ENCODE measurements at regions of chr4 and their contacts with region 1.

Region 1: GRCh38 chr4:123127218-123127617 is 204.8 kb upstream of the NUDT6 start:
- DNase-seq: no peak
- H3K4me3 ChIP-seq: no peak overlapping the region
- H3K27me3 ChIP-seq: no peaks in the 10 kb centered on the region
- CTCF ChIP-seq: no peak; the same call in 1 of the 2 replicates

Region 2: DNA sequence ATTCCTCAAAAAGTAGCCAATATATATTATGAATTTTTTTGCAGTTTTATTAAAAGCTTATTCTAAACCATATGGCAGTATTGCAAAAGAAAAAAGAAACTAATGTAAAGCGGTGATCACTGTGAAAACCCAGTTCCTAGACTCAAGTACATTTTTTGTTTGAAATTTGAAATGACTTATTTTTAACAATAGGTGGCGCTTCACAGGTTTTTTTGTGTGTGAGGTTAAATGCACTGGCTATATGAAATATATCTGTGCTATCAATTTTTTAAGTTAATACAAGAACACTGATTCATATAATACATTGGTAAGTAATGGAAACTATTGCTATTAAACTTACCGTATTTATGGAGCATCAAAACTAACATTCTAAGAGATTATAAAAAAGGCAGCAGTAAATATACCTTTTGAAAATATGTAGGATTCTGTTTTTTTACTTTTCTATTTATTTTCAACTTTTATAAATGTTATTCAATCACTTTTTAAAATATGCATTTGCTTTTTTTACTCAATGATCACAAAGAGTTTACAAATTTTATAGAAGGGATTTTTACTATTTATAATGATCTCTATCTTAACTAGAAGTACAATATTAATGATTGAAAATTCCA is 263.7 kb after region 1 on chr4:
- CTCF ChIA-PET with region 1: interaction called, 10 read pairs
- POLR2A ChIA-PET with region 1: no interaction called
- DNase-seq: no peak
- H3K4me3 ChIP-seq: no peak overlapping the region
- H3K27me3 ChIP-seq: no peaks in the 10 kb centered on the region
- CTCF ChIP-seq: peak; percentile 44

Region 3: GRCh38 chr4:123443401-123444289 is 316.4 kb after region 1 on chr4:
- CTCF ChIA-PET with region 1: no interaction called
- POLR2A ChIA-PET with region 1: no interaction called
- DNase-seq: no peak
- H3K4me3 ChIP-seq: no peak overlapping the region
- H3K27me3 ChIP-seq: no peaks in the 10 kb centered on the region
- CTCF ChIP-seq: no peak

Region 4: DNA sequence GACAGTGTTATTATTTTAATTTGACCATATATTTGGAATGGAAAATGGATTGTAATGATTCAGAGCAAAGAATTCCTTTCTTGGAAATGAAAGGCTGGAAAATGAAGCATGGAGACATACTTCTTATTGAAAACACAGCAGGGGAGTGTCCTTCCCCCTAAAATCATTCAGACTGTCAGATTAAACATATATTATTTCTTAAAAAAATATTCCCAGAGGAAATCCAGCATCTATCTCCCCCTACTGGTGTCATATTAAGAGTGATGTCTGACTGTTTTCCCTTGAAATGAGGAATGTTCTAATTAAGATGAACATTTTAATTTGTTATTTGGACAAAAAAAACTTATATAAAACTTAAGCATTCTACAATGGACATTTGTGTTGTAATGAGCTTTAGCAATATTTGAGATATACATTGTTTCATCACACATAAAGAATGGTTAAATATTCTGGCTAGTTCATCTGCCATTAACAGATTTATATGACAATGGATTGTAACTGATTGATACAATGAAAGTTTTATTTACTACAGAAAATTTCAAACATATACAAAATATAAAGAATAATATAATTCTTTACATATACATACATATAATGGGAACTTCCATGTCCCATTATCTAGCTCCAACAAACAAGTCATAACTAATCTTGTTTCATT is 534.0 kb after region 1 on chr4:
- CTCF ChIA-PET with region 1: interaction called, 11 read pairs
- POLR2A ChIA-PET with region 1: no interaction called
- DNase-seq: no peak
- H3K4me3 ChIP-seq: no peak overlapping the region
- H3K27me3 ChIP-seq: no peaks in the 10 kb centered on the region
- CTCF ChIP-seq: peak; percentile 55